ENCODE measurements at regions of chr9 and their contacts with region 1.

Region 1: GRCh38 chr9:35079426-35080341 is at the start of gene FANCG:
- DNase-seq: peak; percentile 86
- ATAC-seq: peak; percentile 95
- H3K4me3 ChIP-seq: peak within 1 kb of the TSS; percentile 78 to 79 (median 78)
- H3K27ac ChIP-seq: peak within 1 kb of the TSS; percentile 76
- H3K4me1 ChIP-seq: peaks cover 23% of the 10 kb centered on the region
- H3K27me3 ChIP-seq: no peaks in the 10 kb centered on the region; a peak in 1 of 5 replicates
- CTCF ChIP-seq: peak; percentile 44
- EP300 ChIP-seq: no peak
- POLR2A ChIP-seq: peak in 1 of 2 experiments; percentile 47; a peak in 1 of 4 replicates
- RAD21 ChIP-seq: 0 out of 2 replicates have a peak, but pooled peaks have one; percentile 30
- total RNA-seq, gene FANCG: 43.3 and 45.1 TPM in 2 replicates

Region 2: DNA sequence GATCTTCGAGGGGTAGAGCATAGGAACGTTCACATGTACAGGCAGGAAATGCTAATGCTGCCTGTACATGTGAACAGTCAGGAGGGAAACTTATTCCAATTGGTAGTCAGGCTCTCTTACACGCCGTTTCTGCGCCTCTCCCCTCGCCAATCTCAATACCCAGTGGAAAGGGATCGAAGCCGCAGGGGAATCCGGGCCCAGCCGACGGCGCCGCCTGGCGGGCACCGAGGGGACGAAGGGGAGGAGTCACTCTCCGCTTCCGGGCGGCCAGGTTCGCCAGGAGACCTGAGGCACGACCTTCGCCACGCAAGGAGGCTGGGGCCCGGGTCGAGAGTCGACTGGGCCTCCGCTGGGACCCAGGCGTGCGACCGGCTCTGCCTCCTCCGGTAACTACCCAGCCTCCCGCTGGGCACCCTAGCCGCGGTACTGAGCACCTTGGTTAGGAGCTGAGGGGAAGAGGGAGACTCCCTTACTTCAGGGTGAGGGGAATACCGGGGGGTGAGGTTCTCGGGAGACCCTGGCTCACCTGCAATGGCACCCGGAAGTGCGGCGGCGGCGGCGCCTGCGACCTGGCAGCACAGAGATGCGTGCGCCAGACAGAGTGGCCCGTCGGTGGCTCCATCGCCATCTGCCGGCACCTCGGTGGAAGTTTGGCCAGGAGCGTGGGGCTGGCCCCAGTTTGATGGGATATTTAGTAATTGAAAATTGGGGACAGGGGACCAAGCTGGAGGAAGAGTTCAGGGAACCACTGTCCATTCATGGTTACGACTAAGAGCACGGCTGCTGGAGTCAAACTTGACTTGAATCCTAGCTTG is 16.6 kb after region 1 on chr9 and contains the start of gene PIGO:
- CTCF ChIA-PET with region 1: no interaction called
- POLR2A ChIA-PET with region 1: interaction called, 14 read pairs
- in situ Hi-C with region 1: no loop called
- intact Hi-C with region 1: no loop called
- DNase-seq: peak; percentile 83
- ATAC-seq: peak; percentile 93
- H3K4me3 ChIP-seq: peak within 1 kb of the TSS; percentile 77 to 91 (median 83)
- H3K27ac ChIP-seq: peak within 1 kb of the TSS; percentile 98
- H3K4me1 ChIP-seq: peaks cover 26% of the 10 kb centered on the region
- H3K27me3 ChIP-seq: no peaks in the 10 kb centered on the region
- CTCF ChIP-seq: peak; percentile 81
- EP300 ChIP-seq: 0 out of 4 replicates have a peak, but pooled peaks of 1 of the 2 experiments have one; percentile 42
- POLR2A ChIP-seq: peak; percentile 95 to 96
- RAD21 ChIP-seq: peak; percentile 81
- total RNA-seq, gene PIGO: 6.6 and 20.5 TPM in 2 replicates

Region 3: GRCh38 chr9:35102926-35103659 is 23.4 kb after region 1 on chr9 and contains the start of gene STOML2:
- CTCF ChIA-PET with region 1: no interaction called
- POLR2A ChIA-PET with region 1: interaction called, 12 read pairs
- in situ Hi-C with region 1: no loop called
- intact Hi-C with region 1: no loop called
- DNase-seq: peak; percentile 92
- ATAC-seq: peak; percentile 97
- H3K4me3 ChIP-seq: peak within 1 kb of the TSS; percentile 63 to 84 (median 69)
- H3K27ac ChIP-seq: peak within 1 kb of the TSS; percentile 74
- H3K4me1 ChIP-seq: peaks cover 19% of the 10 kb centered on the region
- H3K27me3 ChIP-seq: no peaks in the 10 kb centered on the region; a peak in 1 of 5 replicates
- CTCF ChIP-seq: peak; percentile 55
- EP300 ChIP-seq: peak in 1 of 2 experiments; percentile 49; a peak in 1 of 4 replicates
- POLR2A ChIP-seq: peak; percentile 75 to 90
- RAD21 ChIP-seq: peak; percentile 33; the same call in 1 of the 2 replicates
- total RNA-seq, gene STOML2: 250 and 305 TPM in 2 replicates

Measured in HepG2 (cell line).